ENCODE measurements at regions of chr17 and their contacts with region 1.

Region 1: DNA sequence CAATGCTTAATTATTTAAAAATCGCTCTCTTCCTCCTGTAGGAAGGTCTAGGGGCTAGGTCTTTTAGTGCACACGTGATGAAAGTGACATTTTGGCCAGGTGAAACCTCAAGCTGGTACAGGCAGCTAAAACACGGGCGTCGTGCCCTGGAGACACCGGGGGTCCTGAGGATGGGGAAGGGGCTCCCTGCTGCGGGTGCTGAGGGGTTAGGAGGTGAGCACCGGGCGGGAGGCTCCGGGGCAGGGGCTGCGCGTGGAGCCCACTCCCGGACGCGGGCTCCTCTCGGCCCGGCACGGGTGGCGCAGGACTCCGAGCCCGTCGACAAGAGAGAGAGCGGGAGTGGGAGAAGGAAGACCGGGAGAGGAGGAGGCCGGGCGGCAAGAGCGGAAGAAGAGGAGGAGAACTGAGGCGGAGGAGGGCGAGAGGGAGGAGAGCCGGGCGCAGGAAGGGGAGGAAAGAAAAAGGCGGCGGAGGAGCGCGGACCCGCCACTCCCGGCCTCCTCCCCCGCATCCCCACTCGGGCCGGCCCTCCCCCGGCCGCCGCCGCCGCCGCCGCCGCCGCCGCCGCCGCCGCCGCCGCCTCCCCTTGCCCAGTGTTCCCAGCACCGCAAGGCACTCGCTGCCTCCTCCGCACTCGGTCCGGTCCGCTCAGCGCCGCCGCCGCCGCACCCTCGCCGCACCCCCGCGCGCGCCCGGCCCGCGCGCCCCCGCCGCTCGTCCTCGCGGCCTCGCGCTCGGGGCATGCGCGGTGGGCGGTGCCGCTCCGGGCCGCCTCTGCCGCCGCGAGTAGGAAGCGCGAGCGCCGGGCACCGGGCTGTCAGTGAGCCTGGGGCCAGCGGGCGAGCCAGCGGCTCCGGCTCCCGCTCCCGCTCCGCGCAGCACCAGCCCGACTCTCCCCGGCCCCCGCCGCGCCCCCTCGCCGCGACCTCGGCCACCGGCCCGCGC is at the start of gene PRKCA:
- DNase-seq: peak; percentile 73
- H3K4me3 ChIP-seq: peak within 1 kb of the TSS; percentile 80 to 97 (median 84)
- H3K27ac ChIP-seq: peak within 1 kb of the TSS; percentile 14
- H3K4me1 ChIP-seq: peaks cover 15% of the 10 kb centered on the region
- H3K27me3 ChIP-seq: no peaks in the 10 kb centered on the region
- CTCF ChIP-seq: no peak
- total RNA-seq, gene PRKCA: 6.0 to 15.5 TPM

Region 2: DNA sequence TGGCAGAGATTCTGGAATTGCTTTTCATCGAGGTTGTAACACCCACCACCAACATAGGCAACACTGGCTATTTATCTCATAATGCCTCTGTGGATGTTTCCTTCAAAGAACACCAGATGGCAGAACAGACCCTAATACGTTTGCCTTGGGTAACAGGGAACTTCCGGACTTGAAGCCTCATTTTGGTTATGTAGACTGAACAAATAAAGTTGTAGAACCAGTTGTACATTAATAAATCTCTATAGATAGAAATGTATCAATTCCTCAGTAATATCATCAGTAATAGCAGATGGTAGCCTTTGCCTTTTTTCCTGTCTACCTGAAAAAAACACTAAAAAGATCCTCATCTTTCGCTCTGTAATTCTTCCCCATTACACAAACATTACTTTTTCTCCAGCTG is 47.0 kb before region 1 on chr17:
- CTCF ChIA-PET with region 1: no interaction called
- dilution Hi-C with region 1: no loop called
- in situ Hi-C with region 1: no loop called
- intact Hi-C with region 1: loop called (anchors 1 kb)
- DNase-seq: peak; percentile 69
- H3K4me3 ChIP-seq: no peak overlapping the region
- H3K27ac ChIP-seq: no peak overlapping the region
- H3K4me1 ChIP-seq: no peaks in the 10 kb centered on the region
- H3K27me3 ChIP-seq: no peaks in the 10 kb centered on the region
- CTCF ChIP-seq: peak; percentile 68 to 75

Region 3: GRCh38 chr17:66392783-66393437 is 90.8 kb after region 1 on chr17:
- CTCF ChIA-PET with region 1: no interaction called
- dilution Hi-C with region 1: loop called (anchors 5 kb)
- in situ Hi-C with region 1: no loop called
- intact Hi-C with region 1: no loop called
- DNase-seq: no peak
- H3K4me3 ChIP-seq: no peak overlapping the region
- H3K27ac ChIP-seq: no peak overlapping the region
- H3K4me1 ChIP-seq: peaks cover under 1% of the 10 kb centered on the region
- H3K27me3 ChIP-seq: no peaks in the 10 kb centered on the region
- CTCF ChIP-seq: no peak

Region 4: GRCh38 chr17:66420961-66421371 is 118.9 kb after region 1 on chr17:
- CTCF ChIA-PET with region 1: no interaction called
- dilution Hi-C with region 1: no loop called
- in situ Hi-C with region 1: no loop called
- intact Hi-C with region 1: loop called (anchors 2 kb)
- DNase-seq: peak; percentile 52
- H3K4me3 ChIP-seq: no peak overlapping the region
- H3K27ac ChIP-seq: no peak overlapping the region
- H3K4me1 ChIP-seq: peaks cover 22% of the 10 kb centered on the region
- H3K27me3 ChIP-seq: no peaks in the 10 kb centered on the region
- CTCF ChIP-seq: no peak

Region 5: GRCh38 chr17:66466840-66467367 is 164.8 kb after region 1 on chr17:
- CTCF ChIA-PET with region 1: interaction called, 6 read pairs
- dilution Hi-C with region 1: no loop called
- in situ Hi-C with region 1: no loop called
- intact Hi-C with region 1: loop called (anchors 2 kb)
- DNase-seq: peak; percentile 98
- H3K4me3 ChIP-seq: peak overlapping the region in 1 of 3 experiments; percentile 21
- H3K27ac ChIP-seq: peak overlapping the region; percentile 83
- H3K4me1 ChIP-seq: peaks cover 43% of the 10 kb centered on the region
- H3K27me3 ChIP-seq: no peaks in the 10 kb centered on the region
- CTCF ChIP-seq: no peak

Region 6: GRCh38 chr17:66508896-66509843 is 207.1 kb after region 1 on chr17:
- CTCF ChIA-PET with region 1: no interaction called
- dilution Hi-C with region 1: no loop called
- in situ Hi-C with region 1: no loop called
- intact Hi-C with region 1: loop called (anchors 1 kb)
- DNase-seq: peak; percentile 96
- H3K4me3 ChIP-seq: no peak overlapping the region
- H3K27ac ChIP-seq: peak overlapping the region; percentile 90
- H3K4me1 ChIP-seq: peaks cover 51% of the 10 kb centered on the region
- H3K27me3 ChIP-seq: no peaks in the 10 kb centered on the region
- CTCF ChIP-seq: no peak